Caco-2 (cell line): ENCODE measurements at regions of chr19 and their contacts with region 1.

Region 1: DNA sequence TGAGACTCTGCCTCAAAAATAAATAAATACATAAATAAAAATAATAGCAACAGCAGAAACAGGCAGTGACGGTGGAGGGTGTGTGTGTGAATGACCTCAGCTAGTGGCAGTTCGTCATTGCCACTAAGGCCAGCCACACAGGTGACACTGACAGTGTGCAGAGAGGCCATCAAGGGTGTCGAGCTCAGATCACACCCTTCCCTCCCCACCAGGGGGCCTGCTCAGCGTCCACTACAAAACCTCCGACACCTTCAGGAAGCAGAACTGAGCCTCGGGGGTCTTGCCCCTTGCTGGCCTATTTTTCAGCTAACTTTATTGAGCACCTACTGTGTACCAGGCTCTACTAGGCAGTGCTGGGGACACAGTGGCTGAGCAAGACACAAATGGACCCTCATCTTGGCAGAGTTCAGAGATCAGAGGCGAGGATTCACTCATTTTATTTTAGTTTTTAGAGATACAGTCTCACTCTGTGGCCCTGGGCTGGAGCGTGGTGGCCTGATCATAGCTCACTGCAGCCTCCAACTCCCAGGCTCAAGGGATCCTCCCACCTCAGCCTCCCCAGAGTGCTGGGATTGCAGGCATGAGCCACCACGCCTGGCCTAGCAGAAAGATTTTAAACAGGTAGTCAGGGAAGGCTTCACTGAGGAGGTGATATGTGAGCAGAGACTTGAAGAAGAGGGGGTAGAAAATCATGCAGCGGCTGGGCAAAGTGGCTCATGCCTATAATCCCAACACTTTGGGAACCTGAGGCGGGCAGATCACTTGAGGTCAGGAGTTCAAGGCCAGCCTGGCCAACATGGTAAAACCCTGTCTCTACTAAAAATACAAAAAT is 30.3 kb upstream of the SEMA6B start:
- DNase-seq: peak; percentile 64 to 66
- H3K4me3 ChIP-seq: no peak overlapping the region
- H3K4me3 Mint-ChIP-seq: no peak overlapping the region
- H3K27ac Mint-ChIP-seq: no peak overlapping the region
- H3K4me1 ChIP-seq: no peaks in the 10 kb centered on the region
- H3K4me1 Mint-ChIP-seq: no peaks in the 10 kb centered on the region
- H3K27me3 ChIP-seq: no peaks in the 10 kb centered on the region
- H3K27me3 Mint-ChIP-seq: peaks cover 7% of the 10 kb centered on the region
- CTCF ChIP-seq: peak; percentile 60 to 70

Region 2: DNA sequence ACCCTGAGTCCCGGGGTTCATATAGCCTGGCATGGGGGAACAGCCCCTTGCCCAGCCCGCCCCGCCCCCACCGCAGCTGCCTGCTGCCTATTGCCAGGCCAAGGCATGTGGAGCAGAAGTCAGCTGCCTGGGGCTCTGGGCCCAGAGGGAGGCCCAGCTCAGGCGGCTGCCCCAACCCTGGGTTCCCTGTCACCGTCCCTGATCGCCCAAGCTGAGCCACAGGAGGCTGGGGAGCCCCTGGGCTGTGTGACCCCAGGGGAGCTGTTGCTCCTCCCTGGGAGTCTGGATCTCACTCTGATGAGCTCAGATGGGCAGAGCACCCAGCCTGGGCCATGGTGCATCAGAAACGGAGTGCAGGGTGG is 72.9 kb before region 1 on chr19:
- CTCF ChIA-PET with region 1: no interaction called
- POLR2A ChIA-PET with region 1: no interaction called
- intact Hi-C with region 1: no loop called
- DNase-seq: no peak
- H3K4me3 ChIP-seq: no peak overlapping the region
- H3K4me3 Mint-ChIP-seq: no peak overlapping the region
- H3K27ac Mint-ChIP-seq: no peak overlapping the region
- H3K4me1 ChIP-seq: peaks cover 10% of the 10 kb centered on the region
- H3K4me1 Mint-ChIP-seq: peaks cover 11% of the 10 kb centered on the region
- H3K27me3 ChIP-seq: no peaks in the 10 kb centered on the region
- H3K27me3 Mint-ChIP-seq: no peaks in the 10 kb centered on the region
- CTCF ChIP-seq: no peak

Region 3: DNA sequence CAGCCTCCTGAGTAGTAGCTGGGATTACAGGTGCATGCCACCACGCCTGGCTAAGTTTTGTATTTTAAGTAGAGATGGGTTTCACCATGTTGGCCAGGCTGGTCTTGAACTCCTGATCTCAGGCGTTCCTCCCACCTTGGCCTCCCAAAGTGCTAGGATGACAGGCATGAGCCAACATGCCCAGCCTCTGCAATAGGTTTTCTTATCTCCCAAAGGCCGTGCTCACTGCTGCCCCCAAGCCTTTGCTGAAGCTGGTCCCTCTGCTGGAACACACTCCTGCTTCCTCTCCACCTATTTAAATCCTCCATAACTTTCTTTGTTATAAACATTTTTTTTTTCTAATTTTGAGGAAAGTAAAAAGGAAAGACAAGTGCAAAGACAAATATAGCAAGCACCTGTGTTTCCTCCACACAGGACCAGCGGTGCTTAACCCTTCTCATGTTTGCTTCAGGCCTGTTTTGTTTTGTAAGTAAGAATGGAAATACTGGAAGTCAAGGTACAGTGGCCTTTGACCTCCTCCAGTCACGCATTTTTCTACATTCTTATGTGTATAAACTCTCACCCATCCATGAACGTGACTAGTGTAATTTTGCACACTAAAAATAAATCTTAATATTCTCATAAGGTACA is 35.1 kb after region 1 on chr19:
- CTCF ChIA-PET with region 1: interaction called, 4 read pairs
- POLR2A ChIA-PET with region 1: no interaction called
- intact Hi-C with region 1: loop called (anchors 5 kb)
- DNase-seq: peak; percentile 48 to 68
- H3K4me3 ChIP-seq: no peak overlapping the region
- H3K4me3 Mint-ChIP-seq: no peak overlapping the region
- H3K27ac Mint-ChIP-seq: no peak overlapping the region
- H3K4me1 ChIP-seq: peaks cover 9% of the 10 kb centered on the region; the same call in 1 of the 2 replicates
- H3K4me1 Mint-ChIP-seq: no peaks in the 10 kb centered on the region
- H3K27me3 ChIP-seq: no peaks in the 10 kb centered on the region
- H3K27me3 Mint-ChIP-seq: no peaks in the 10 kb centered on the region
- CTCF ChIP-seq: peak in 1 of 2 experiments; percentile 42

Region 4: GRCh38 chr19:4674895-4675294 is 85.1 kb after region 1 on chr19:
- CTCF ChIA-PET with region 1: no interaction called
- POLR2A ChIA-PET with region 1: no interaction called
- intact Hi-C with region 1: no loop called
- DNase-seq: no peak
- H3K4me3 ChIP-seq: no peak overlapping the region
- H3K4me3 Mint-ChIP-seq: no peak overlapping the region
- H3K27ac Mint-ChIP-seq: no peak overlapping the region
- H3K4me1 ChIP-seq: peaks cover 8% of the 10 kb centered on the region
- H3K4me1 Mint-ChIP-seq: no peaks in the 10 kb centered on the region
- H3K27me3 ChIP-seq: no peaks in the 10 kb centered on the region
- H3K27me3 Mint-ChIP-seq: no peaks in the 10 kb centered on the region
- CTCF ChIP-seq: no peak

Region 5: GRCh38 chr19:4707956-4708650 is 118.3 kb after region 1 on chr19:
- CTCF ChIA-PET with region 1: no interaction called
- POLR2A ChIA-PET with region 1: no interaction called
- intact Hi-C with region 1: no loop called
- DNase-seq: no peak
- H3K4me3 ChIP-seq: no peak overlapping the region
- H3K4me3 Mint-ChIP-seq: no peak overlapping the region
- H3K27ac Mint-ChIP-seq: no peak overlapping the region
- H3K4me1 ChIP-seq: peaks cover 13% of the 10 kb centered on the region
- H3K4me1 Mint-ChIP-seq: no peaks in the 10 kb centered on the region
- H3K27me3 ChIP-seq: no peaks in the 10 kb centered on the region
- H3K27me3 Mint-ChIP-seq: no peaks in the 10 kb centered on the region
- CTCF ChIP-seq: no peak